ENCODE measurements at regions of chr9 and their contacts with region 1.

Region 1: GRCh38 chr9:20790721-20791120 is 106.7 kb downstream of the FOCAD start:
- H3K4me3 ChIP-seq: no peak overlapping the region
- H3K27ac ChIP-seq: no peak overlapping the region
- H3K4me1 ChIP-seq: peaks cover 6% of the 10 kb centered on the region; the same call in 1 of the 2 replicates
- CTCF ChIP-seq: no peak

Region 2: GRCh38 chr9:20835364-20836286 is 44.9 kb after region 1 on chr9:
- CTCF ChIA-PET with region 1: interaction called, 10 read pairs
- POLR2A ChIA-PET with region 1: no interaction called
- H3K4me3 ChIP-seq: no peak overlapping the region
- H3K27ac ChIP-seq: no peak overlapping the region
- H3K4me1 ChIP-seq: peaks cover 11% of the 10 kb centered on the region
- CTCF ChIP-seq: no peak

Measured in HEK293 (cell line).